ENCODE measurements at regions of chr1 and their contacts with region 1.

Region 1: GRCh38 chr1:109426278-109427170 is at the start of gene PSMA5:
- DNase-seq: peak; percentile 94
- H3K4me3 Mint-ChIP-seq: peak within 1 kb of the TSS; percentile 97
- H3K27ac Mint-ChIP-seq: peak within 1 kb of the TSS; percentile 96
- H3K4me1 Mint-ChIP-seq: peaks cover 44% of the 10 kb centered on the region
- H3K27me3 Mint-ChIP-seq: peaks cover under 1% of the 10 kb centered on the region
- total RNA-seq, gene PSMA5: 241 and 283 TPM in 2 replicates

Region 2: GRCh38 chr1:108963052-108963686 is 463.4 kb before region 1 on chr1 and contains the start of gene CLCC1:
- intact Hi-C with region 1: loop called (anchors 1 kb)
- DNase-seq: peak; percentile 93
- H3K4me3 Mint-ChIP-seq: peak within 1 kb of the TSS; percentile 89
- H3K27ac Mint-ChIP-seq: peak within 1 kb of the TSS; percentile 94
- H3K4me1 Mint-ChIP-seq: peaks cover 26% of the 10 kb centered on the region
- H3K27me3 Mint-ChIP-seq: peaks cover 4% of the 10 kb centered on the region
- total RNA-seq, gene CLCC1: 23.1 and 23.4 TPM in 2 replicates

Region 3: DNA sequence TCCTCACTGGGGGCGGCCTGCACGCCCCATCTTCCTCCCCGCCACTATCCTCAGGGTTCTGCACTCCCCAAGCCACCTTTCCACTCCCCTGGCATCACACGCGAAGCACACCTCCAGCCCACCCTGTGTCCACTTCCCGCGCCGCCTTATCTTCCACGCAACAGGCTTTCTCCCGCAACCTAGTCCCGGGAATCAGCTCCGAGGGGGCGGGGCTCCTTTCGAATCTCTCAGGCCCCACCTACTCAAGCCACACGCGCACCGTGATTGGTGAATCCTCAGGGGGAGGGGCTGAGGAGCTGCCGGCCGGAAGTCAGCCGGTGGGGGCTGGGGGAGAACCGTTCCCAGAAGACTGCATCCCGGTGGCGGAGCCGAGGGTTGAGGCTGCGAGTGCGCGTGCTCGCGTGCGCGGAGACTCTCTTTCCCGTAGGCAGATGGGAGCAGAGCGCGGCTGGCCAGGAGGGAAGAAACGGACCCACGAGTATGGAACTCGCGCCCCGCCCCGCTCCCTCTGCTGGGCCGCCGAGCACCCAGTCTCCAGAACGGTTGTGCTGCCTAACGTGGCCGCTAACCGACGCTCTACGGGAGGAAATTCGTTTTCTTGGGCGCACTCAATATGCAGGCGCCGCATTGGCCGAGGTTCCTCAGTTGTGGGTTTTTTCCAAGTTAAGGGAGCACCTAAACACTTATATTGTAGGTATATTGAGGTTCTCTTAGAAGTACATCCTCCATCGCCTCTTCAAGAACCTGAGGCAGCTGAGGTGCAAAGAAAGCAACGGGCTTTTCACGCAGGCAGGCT is 143.4 kb before region 1 on chr1 and contains the start of gene PSRC1:
- intact Hi-C with region 1: loop called (anchors 1 kb)
- DNase-seq: peak; percentile 89
- H3K4me3 Mint-ChIP-seq: peak within 1 kb of the TSS; percentile 97
- H3K27ac Mint-ChIP-seq: peak within 1 kb of the TSS; percentile 81
- H3K4me1 Mint-ChIP-seq: peaks cover 35% of the 10 kb centered on the region
- H3K27me3 Mint-ChIP-seq: peaks cover 3% of the 10 kb centered on the region
- total RNA-seq, gene PSRC1: 3.6 and 5.5 TPM in 2 replicates

Region 4: DNA sequence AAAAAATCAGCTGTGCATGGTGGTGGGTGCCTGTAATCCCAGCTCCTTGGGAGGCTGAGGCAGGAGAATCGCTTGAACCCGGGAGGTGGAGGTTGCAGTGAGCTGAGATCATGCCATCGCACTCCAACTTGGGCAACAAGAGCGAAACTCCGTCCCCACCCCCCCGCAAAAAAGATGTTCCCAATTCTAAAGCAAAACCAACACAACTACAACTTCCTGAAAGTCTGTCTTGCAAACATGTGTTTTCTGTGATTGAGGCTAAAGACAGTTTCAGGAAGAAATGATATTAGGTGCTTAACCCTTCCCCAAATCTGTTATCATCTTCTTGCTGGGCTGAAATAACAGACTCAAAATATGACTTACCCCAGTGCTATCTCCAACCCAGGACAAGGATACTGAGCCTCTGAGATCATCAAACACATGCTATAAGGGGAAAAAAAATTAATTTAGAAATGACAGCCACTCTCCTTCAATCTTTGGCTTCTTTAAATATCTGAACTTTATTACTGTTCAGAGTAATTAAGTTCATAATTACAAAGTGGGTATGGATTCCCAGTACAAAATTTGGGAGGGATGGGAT is 57.3 kb before region 1 on chr1:
- intact Hi-C with region 1: no loop called
- DNase-seq: no peak
- H3K4me3 Mint-ChIP-seq: no peak overlapping the region
- H3K27ac Mint-ChIP-seq: no peak overlapping the region
- H3K4me1 Mint-ChIP-seq: peaks cover 45% of the 10 kb centered on the region
- H3K27me3 Mint-ChIP-seq: peaks cover 14% of the 10 kb centered on the region

Region 5: DNA sequence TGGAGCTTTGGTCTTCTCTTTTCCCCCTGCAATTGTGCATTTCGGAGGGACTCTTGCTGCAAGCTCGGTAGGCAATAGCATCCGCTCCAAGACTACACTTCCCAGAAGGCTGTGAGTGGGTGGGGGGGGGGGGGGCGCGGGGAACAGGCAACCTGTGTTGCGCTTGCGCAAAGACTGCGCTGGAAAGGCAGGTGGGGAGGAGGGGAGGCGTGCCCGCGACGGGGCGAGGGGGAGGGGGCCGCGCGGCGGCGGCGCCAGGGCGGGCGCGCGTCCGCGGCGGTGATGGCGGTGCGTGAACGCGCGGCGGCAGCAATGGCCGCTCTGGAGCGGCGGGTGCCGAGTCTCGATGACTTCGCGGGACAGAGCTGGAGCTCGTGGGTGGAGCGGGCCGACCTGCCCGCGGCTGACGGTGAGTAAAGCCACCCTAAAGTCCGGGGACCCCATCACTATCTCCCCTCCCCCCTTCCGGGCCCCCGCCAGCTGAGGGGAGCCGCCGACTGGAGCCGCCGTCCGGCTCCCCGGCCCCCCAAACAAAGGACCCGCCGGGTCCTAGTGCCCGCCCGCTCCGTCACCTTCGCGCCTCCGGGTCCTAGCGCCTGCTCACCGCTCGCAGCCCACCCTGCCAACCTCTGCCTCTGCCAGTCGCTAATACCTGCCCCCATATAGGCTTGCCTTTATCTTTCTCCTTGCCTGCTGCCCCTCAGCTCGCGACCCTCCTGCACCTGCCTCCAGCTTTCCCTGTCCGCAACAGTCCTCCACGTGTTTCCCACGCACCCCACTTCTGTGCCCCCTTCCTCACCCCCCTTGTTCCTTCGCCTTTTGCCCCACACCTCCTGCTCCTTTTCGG is 57.4 kb after region 1 on chr1 and contains the start of gene ATXN7L2:
- intact Hi-C with region 1: loop called (anchors 1 kb)
- DNase-seq: peak; percentile 87
- H3K4me3 Mint-ChIP-seq: peak within 1 kb of the TSS; percentile 95
- H3K27ac Mint-ChIP-seq: peak within 1 kb of the TSS; percentile 96
- H3K4me1 Mint-ChIP-seq: peaks cover 35% of the 10 kb centered on the region
- H3K27me3 Mint-ChIP-seq: peaks cover 13% of the 10 kb centered on the region
- total RNA-seq, gene ATXN7L2: 17.4 and 18.0 TPM in 2 replicates

Region 6: DNA sequence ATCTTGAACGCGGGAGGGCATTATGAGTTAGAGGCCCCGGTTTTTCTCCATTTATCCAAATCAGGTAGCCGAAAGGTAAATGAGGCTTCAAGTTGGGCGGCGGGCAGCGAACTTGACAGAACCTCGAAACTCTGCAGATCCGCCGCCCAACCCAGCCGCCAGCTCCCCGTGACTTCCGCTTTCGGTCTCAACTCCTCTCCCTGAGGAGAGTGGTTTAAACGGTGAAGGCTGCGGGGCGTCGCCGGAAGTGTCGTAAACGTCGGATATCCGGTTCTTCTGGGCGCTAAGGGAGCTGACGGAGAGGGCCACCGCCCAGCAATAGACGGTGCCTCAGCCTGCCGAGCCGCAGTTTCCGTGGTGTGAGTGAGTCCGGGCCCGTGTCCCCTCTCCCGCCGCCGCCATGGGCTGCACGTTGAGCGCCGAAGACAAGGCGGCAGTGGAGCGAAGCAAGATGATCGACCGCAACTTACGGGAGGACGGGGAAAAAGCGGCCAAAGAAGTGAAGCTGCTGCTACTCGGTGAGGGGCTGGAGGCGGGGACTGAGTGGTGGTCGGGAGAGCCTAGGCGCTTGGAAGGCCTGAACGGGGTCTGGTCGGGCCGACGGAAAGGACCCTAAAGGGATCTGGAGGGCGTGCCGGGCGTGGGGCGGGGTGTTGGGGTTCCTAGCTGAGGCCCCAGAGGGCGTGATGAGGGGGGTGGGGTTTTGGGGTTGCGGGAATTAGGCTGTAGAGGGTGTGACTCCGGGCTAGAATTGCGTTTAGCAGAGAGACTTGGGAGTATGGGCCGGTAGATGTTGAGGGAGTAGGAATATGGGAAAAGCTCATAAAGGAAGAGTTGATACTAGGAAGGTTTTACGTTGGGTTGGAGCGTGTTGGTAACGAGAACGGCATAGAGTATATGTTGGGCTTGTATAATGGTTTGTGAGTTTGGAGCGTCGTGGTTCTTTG is 122.1 kb after region 1 on chr1 and contains the start of gene GNAI3:
- intact Hi-C with region 1: loop called (anchors 1 kb)
- DNase-seq: peak; percentile 96
- H3K4me3 Mint-ChIP-seq: peak within 1 kb of the TSS; percentile 94
- H3K27ac Mint-ChIP-seq: peak within 1 kb of the TSS; percentile 96
- H3K4me1 Mint-ChIP-seq: peaks cover 48% of the 10 kb centered on the region
- H3K27me3 Mint-ChIP-seq: no peaks in the 10 kb centered on the region
- total RNA-seq, gene GNAI3: 8.4 and 8.9 TPM in 2 replicates

Region 7: DNA sequence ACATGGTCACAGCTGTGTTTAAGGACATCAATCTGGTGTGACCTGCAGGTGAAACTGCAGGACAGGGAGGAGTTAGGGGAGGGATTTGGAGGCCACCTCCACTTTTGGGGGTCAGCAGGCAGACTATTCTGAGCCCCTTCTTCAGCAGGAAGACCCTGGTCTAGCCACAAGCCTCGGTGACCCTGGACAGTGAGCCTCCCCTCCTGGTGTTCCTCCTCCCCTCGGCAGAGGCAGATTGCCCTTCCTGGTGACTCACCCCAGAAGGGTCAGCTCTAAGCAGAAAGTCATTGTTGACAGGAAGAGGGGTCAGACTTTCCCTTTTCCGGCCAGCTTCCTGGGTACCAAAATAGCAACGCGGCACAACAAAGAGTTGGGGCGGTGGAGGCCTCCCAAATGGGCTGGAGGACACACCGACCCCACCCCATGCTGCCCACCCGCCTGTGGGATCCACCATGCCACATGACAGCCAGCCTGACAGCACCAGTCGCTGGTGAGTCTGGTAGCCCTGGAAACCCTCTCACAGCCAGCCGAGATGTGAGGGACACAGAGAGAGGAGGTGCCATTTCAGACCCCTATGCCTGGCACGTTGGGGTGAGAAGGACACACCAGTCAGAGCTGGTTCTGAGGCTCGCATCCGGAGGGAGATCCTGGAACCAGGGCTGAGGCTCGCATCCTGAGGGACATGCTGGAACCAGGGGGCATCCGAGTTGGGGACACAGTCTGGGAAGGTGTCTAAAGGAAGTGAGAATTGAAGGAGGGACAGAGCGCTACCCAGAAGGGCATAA is 469.4 kb after region 1 on chr1:
- intact Hi-C with region 1: loop called (anchors 10 kb)
- DNase-seq: peak; percentile 30
- H3K4me3 Mint-ChIP-seq: no peak overlapping the region
- H3K27ac Mint-ChIP-seq: no peak overlapping the region
- H3K4me1 Mint-ChIP-seq: peaks cover 5% of the 10 kb centered on the region
- H3K27me3 Mint-ChIP-seq: no peaks in the 10 kb centered on the region

Measured in activated T-helper 1 cell treated with anti-CD3 and anti-CD28 coated beads, Interleukin-12 subunit alpha, Interleukin-12 subunit beta, Interleukin-2, Interleukin-4 antibody, amounts not matched to agents 30 ng/mL and 10 ng/mL and 1 ng/mL, durations not matched to agents 14 hours and 24 hours and 36 hours (primary cell).